Activated T-helper 1 cell treated with anti-CD3 and anti-CD28 coated beads, Interleukin-12 subunit alpha, Interleukin-12 subunit beta, Interleukin-2, Interleukin-4 antibody, amounts not matched to agents 30 ng/mL and 10 ng/mL and 1 ng/mL, durations not matched to agents 14 hours and 24 hours and 36 hours (primary cell): ENCODE measurements at regions of chr21 and their contacts with region 1.

Region 1: GRCh38 chr21:14454016-14455009 is 71.4 kb upstream of the HSPA13 start:
- DNase-seq: no peak
- H3K4me3 Mint-ChIP-seq: peak overlapping the region; percentile 62
- H3K27ac Mint-ChIP-seq: peak overlapping the region; percentile 92
- H3K4me1 Mint-ChIP-seq: peaks cover 74% of the 10 kb centered on the region
- H3K27me3 Mint-ChIP-seq: no peaks in the 10 kb centered on the region

Region 2: GRCh38 chr21:14076143-14076806 is 378.0 kb before region 1 on chr21:
- intact Hi-C with region 1: no loop called
- DNase-seq: no peak
- H3K4me3 Mint-ChIP-seq: no peak overlapping the region
- H3K27ac Mint-ChIP-seq: peak overlapping the region; percentile 29
- H3K4me1 Mint-ChIP-seq: no peaks in the 10 kb centered on the region
- H3K27me3 Mint-ChIP-seq: no peaks in the 10 kb centered on the region

Region 3: DNA sequence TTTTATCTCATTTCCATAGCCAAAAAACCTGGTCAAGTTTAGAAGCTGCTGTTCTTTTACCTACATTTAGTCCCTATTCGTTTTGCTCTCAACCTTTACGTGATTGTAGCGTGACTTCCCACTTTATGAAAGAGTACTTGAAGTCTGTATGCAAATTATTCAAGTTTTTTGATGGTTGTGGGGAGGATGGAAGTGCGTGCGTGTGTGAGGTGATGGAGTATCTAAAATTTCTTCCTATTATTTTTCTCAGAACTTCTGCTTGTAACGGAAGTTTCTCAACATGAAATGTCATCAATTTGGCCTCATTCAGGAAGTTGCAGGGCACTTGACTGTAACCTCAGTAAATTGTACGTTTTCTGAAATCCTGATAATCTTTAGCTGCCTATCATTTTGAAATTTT is 27.9 kb after region 1 on chr21:
- intact Hi-C with region 1: loop called (anchors 1 kb)
- DNase-seq: peak; percentile 9
- H3K4me3 Mint-ChIP-seq: peak overlapping the region; percentile 44
- H3K27ac Mint-ChIP-seq: peak overlapping the region; percentile 93
- H3K4me1 Mint-ChIP-seq: peaks cover 74% of the 10 kb centered on the region
- H3K27me3 Mint-ChIP-seq: no peaks in the 10 kb centered on the region

Region 4: GRCh38 chr21:14487490-14488432 is 33.4 kb after region 1 on chr21:
- intact Hi-C with region 1: loop called (anchors 1 kb)
- DNase-seq: no peak
- H3K4me3 Mint-ChIP-seq: peak overlapping the region; percentile 31
- H3K27ac Mint-ChIP-seq: peak overlapping the region; percentile 90
- H3K4me1 Mint-ChIP-seq: peaks cover 74% of the 10 kb centered on the region
- H3K27me3 Mint-ChIP-seq: no peaks in the 10 kb centered on the region

Region 5: DNA sequence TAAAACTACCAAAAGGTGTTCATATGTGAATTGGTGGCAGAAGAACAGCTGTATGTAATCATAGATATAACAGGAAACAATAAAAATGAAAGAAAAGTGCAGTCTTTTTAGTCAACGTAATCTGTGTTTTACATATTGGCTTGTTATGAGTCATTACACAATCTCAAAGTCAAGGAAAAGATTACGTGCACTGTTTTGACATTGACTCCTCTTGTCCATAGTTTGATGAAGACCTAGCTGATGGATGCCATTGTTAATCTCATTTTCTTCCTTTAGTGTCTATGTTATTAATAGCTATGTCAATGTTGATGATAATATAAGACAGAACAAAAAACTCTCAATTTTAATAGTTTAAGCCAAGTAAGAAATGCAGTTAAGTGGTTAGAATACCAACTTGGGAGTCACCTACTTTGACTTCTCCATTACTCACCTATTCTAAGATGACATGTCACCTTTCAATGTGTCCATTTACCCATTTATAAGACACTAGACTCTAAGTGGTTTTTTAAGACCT is 176.3 kb after region 1 on chr21:
- intact Hi-C with region 1: loop called (anchors 5 kb)
- DNase-seq: no peak
- H3K4me3 Mint-ChIP-seq: no peak overlapping the region
- H3K27ac Mint-ChIP-seq: peak overlapping the region; percentile 72
- H3K4me1 Mint-ChIP-seq: peaks cover 14% of the 10 kb centered on the region
- H3K27me3 Mint-ChIP-seq: peaks cover 2% of the 10 kb centered on the region

Region 6: GRCh38 chr21:14725219-14725618 is 270.9 kb after region 1 on chr21:
- intact Hi-C with region 1: no loop called
- DNase-seq: no peak
- H3K4me3 Mint-ChIP-seq: no peak overlapping the region
- H3K27ac Mint-ChIP-seq: no peak overlapping the region
- H3K4me1 Mint-ChIP-seq: peaks cover 27% of the 10 kb centered on the region
- H3K27me3 Mint-ChIP-seq: no peaks in the 10 kb centered on the region